ENCODE measurements at regions of chr17 and their contacts with region 1.

Region 1: GRCh38 chr17:7844292-7845154 is 10.3 kb upstream of the TMEM88 start:
- DNase-seq: peak; percentile 93 to 96 (median 95)
- H3K4me3 ChIP-seq: peak overlapping the region; percentile 66 to 92 (median 79)
- H3K4me3 Mint-ChIP-seq: peak overlapping the region; percentile 93 to 98
- H3K27ac ChIP-seq: peak overlapping the region; percentile 98 to 100
- H3K27ac Mint-ChIP-seq: peak overlapping the region; percentile 97 to 100 (median 100)
- H3K4me1 ChIP-seq: peaks cover 31 to 33% of the 10 kb centered on the region in 2 donors
- H3K4me1 Mint-ChIP-seq: peaks cover 26% of the 10 kb centered on the region
- H3K27me3 ChIP-seq: no peaks in the 10 kb centered on the region
- H3K27me3 Mint-ChIP-seq: peaks cover 0 to 14% (median 4%) of the 10 kb centered on the region in 3 donors
- CTCF ChIP-seq: no peak

Region 2: GRCh38 chr17:7484067-7484918 is 360.2 kb before region 1 on chr17 and contains the start of gene POLR2A:
- intact Hi-C with region 1: loop called in 1 of 2 experiments (anchors 5 kb)
- DNase-seq: peak; percentile 96 to 99 (median 98)
- H3K4me3 ChIP-seq: peak within 1 kb of the TSS; percentile 75 to 90 (median 87)
- H3K4me3 Mint-ChIP-seq: peak within 1 kb of the TSS; percentile 93 to 97
- H3K27ac ChIP-seq: peak within 1 kb of the TSS; percentile 95 to 98
- H3K27ac Mint-ChIP-seq: peak within 1 kb of the TSS; percentile 99 to 100 (median 100)
- H3K4me1 ChIP-seq: peaks cover 39 to 59% of the 10 kb centered on the region in 2 donors
- H3K4me1 Mint-ChIP-seq: peaks cover 70% of the 10 kb centered on the region
- H3K27me3 ChIP-seq: no peaks in the 10 kb centered on the region
- H3K27me3 Mint-ChIP-seq: peaks cover 1 to 3% (median 2%) of the 10 kb centered on the region in 3 donors
- CTCF ChIP-seq: no peak
- polyA plus RNA-seq, gene POLR2A: 12.1 to 27.9 (median 25.4) TPM

Region 3: DNA sequence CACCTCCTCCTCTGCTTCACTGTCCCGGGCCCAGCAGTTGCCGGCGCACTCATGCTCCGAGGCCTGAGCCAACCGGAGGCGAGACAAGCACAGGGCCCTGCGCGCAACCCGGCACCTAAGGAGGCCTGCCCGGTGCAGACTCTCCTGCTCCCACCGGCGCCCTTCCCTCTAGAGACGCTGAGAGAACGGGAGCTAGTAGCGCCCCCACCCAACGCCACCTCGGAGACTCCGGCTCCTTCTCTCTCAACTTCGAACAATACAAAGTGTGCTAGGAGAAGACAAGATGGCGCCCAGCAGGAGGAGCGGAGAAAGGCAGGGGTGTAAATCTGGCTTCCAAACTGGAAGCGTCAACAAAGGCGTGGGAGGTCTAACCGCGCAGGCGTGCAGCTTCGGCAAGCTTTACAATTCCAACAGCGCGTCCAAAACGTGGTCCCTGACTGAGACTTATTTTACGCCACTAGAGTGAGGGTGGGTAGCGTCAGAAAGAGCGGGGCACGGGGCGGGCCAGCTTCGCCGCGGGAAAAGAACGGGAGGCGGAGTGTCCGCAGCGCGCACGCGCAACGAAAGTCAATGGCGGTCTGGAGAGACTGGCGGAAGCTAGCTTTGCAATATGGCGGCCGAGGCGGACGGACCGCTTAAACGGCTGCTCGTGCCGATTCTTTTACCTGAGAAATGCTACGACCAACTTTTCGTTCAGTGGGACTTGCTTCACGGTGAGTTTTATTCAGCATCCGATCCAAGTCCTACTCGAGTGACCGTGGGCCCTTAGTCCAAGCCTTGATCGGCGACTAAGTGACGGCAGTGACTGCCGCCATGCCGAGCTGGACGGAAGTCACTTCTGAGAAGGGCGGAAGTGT is 261.0 kb before region 1 on chr17 and contains the start of gene MPDU1:
- intact Hi-C with region 1: loop called (anchors 5 kb)
- DNase-seq: peak; percentile 94 to 98 (median 97)
- H3K4me3 ChIP-seq: peak within 1 kb of the TSS; percentile 59 to 98 (median 60)
- H3K4me3 Mint-ChIP-seq: peak within 1 kb of the TSS; percentile 98 to 99
- H3K27ac ChIP-seq: peak within 1 kb of the TSS; percentile 99
- H3K27ac Mint-ChIP-seq: peak within 1 kb of the TSS; percentile 98 to 100 (median 100)
- H3K4me1 ChIP-seq: peaks cover 74 to 91% of the 10 kb centered on the region in 2 donors
- H3K4me1 Mint-ChIP-seq: peaks cover 70% of the 10 kb centered on the region
- H3K27me3 ChIP-seq: no peaks in the 10 kb centered on the region
- H3K27me3 Mint-ChIP-seq: peaks cover 0 to 6% (median 2%) of the 10 kb centered on the region in 3 donors
- CTCF ChIP-seq: no peak
- polyA plus RNA-seq, gene MPDU1: 100 to 107 (median 103) TPM

Region 4: GRCh38 chr17:7750321-7750821 is 94.2 kb before region 1 on chr17:
- intact Hi-C with region 1: no loop called
- DNase-seq: no peak
- H3K4me3 ChIP-seq: no peak overlapping the region
- H3K4me3 Mint-ChIP-seq: no peak overlapping the region
- H3K27ac ChIP-seq: no peak overlapping the region
- H3K27ac Mint-ChIP-seq: no peak overlapping the region
- H3K4me1 ChIP-seq: peaks cover 0 to 10% of the 10 kb centered on the region in 2 donors
- H3K4me1 Mint-ChIP-seq: peaks cover 7% of the 10 kb centered on the region
- H3K27me3 ChIP-seq: no peaks in the 10 kb centered on the region
- H3K27me3 Mint-ChIP-seq: peaks cover 0 to 9% (median 7%) of the 10 kb centered on the region in 3 donors
- CTCF ChIP-seq: no peak

Region 5: DNA sequence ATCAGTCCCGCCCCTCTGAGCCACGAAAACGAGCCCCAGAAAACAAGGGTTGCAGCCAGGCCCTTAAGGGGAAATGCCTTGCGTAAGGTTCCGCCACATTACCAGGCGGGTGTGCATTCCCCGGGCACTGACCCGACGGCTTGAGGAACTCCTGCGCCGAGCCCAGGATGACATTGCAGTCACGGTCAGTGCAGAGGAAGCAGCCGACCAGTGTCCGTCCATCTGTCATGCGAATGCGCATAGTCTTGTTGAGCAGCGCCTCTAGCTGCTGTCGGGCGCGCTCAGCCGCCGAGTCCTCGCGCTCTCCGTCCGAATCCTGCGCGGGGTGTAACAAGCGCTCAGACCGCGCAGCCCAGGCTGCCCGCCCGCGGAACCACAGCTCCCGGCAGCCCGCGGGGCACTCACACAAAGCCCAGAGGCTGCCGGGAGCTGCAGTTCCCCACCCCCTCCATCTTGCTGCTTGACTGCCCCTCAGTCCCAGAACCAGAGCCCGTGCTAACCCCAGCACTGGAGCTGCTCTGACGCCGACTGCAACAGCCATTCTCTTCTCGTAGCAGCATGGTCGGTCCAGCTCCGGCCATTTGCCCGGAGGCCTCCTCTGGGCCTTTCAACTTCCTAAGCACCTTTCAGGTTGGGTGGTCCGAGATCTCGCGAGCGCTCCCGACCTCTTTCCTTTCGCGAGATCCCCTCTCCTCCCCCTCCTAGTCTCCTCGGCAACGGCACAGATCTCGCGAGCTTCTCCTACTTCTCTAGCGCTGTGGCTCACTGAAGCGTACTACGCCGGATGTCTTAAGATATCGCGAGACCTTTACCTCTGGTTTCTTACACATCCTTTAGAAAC is 12.6 kb after region 1 on chr17 and contains the start of gene NAA38:
- intact Hi-C with region 1: loop called (anchors 2 kb)
- DNase-seq: peak; percentile 97 to 99 (median 98)
- H3K4me3 ChIP-seq: peak within 1 kb of the TSS; percentile 67 to 95 (median 74)
- H3K4me3 Mint-ChIP-seq: no peak within 1 kb of the TSS
- H3K27ac ChIP-seq: peak within 1 kb of the TSS; percentile 94 to 95
- H3K27ac Mint-ChIP-seq: no peak within 1 kb of the TSS
- H3K4me1 ChIP-seq: peaks cover 38 to 48% of the 10 kb centered on the region in 2 donors
- H3K4me1 Mint-ChIP-seq: no peaks in the 10 kb centered on the region
- H3K27me3 ChIP-seq: no peaks in the 10 kb centered on the region
- H3K27me3 Mint-ChIP-seq: peaks cover 0 to 4% (median 2%) of the 10 kb centered on the region in 3 donors
- CTCF ChIP-seq: no peak
- polyA plus RNA-seq, gene NAA38: 63.8 to 197 (median 148) TPM

Region 6: DNA sequence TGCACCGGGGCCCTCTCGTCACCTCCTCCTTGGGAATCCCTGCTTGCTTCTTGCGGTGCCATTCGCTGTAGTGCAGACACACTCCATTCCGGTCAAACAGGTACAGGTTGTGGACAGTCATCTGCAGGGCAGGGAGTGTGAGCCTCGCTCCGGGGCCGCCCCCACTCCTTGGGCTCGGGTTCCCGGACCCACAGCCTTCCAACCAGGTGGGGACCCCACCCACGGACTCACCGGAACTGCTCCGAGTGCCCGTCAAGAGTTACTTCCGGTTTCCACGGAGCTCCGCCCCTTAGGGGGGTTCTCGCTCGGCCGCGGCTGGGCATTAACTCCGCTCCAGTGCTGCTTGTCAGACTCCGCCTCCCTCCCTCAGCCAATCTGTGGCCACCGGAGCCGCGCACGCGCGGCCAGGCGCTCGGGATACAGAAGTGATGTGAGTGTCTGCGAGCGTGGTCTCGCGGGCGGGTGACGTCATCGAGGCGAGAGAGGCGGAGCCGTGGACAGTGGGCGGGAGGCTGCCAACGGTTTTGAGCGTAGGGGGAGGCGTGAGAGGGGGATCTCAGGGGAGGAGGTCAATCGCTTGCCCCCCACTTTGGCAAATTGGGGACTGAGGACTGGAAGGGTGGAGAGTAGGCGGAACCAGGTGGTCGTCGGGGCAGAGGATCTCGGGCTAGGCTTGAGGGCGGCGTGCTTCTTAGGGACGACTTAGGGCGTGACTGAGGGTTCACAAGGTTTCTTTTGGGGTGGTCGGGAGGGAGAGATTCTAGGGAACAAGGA is 87.4 kb after region 1 on chr17 and contains the starts of genes CNTROB and TRAPPC1:
- intact Hi-C with region 1: loop called in 1 of 2 experiments (anchors 5 kb)
- DNase-seq: peak; percentile 99 to 100 (median 100)
- H3K4me3 ChIP-seq: peak within 1 kb of the TSS; percentile 68 to 86 (median 85)
- H3K4me3 Mint-ChIP-seq: peak within 1 kb of the TSS; percentile 97 to 100
- H3K27ac ChIP-seq: peak within 1 kb of the TSS; percentile 74 to 88
- H3K27ac Mint-ChIP-seq: peak within 1 kb of the TSS; percentile 95 to 100 (median 99)
- H3K4me1 ChIP-seq: peaks cover 26 to 37% of the 10 kb centered on the region in 2 donors
- H3K4me1 Mint-ChIP-seq: peaks cover 44% of the 10 kb centered on the region
- H3K27me3 ChIP-seq: no peaks in the 10 kb centered on the region
- H3K27me3 Mint-ChIP-seq: peaks cover 0 to 4% (median 1%) of the 10 kb centered on the region in 3 donors
- CTCF ChIP-seq: no peak
- polyA plus RNA-seq, gene CNTROB: 4.7 to 22.8 (median 6.5) TPM
- polyA plus RNA-seq, gene TRAPPC1: 172 to 266 (median 224) TPM

Region 7: GRCh38 chr17:8156246-8156992 is 311.9 kb after region 1 on chr17:
- intact Hi-C with region 1: loop called (anchors 5 to 10 kb)
- DNase-seq: peak; percentile 100
- H3K4me3 ChIP-seq: peak overlapping the region; percentile 65 to 100 (median 88)
- H3K4me3 Mint-ChIP-seq: no peak overlapping the region
- H3K27ac ChIP-seq: peak overlapping the region; percentile 89 to 99
- H3K27ac Mint-ChIP-seq: no peak overlapping the region
- H3K4me1 ChIP-seq: peaks cover 63 to 93% of the 10 kb centered on the region in 2 donors
- H3K4me1 Mint-ChIP-seq: peaks cover 50% of the 10 kb centered on the region
- H3K27me3 ChIP-seq: no peaks in the 10 kb centered on the region
- H3K27me3 Mint-ChIP-seq: peaks cover 0 to 5% (median 0%) of the 10 kb centered on the region in 3 donors
- CTCF ChIP-seq: no peak

Measured in CD14-positive monocyte (primary cell).